ENCODE measurements at regions of chr7 and their contacts with region 1.

Region 1: GRCh38 chr7:47852330-47853245 is 95.7 kb downstream of the PKD1L1 start:
- DNase-seq: peak in 1 of 2 experiments; percentile 25
- H3K4me3 ChIP-seq: no peak overlapping the region
- H3K4me3 Mint-ChIP-seq: no peak overlapping the region
- H3K27ac Mint-ChIP-seq: no peak overlapping the region
- H3K4me1 ChIP-seq: no peaks in the 10 kb centered on the region
- H3K4me1 Mint-ChIP-seq: no peaks in the 10 kb centered on the region
- H3K27me3 ChIP-seq: no peaks in the 10 kb centered on the region
- H3K27me3 Mint-ChIP-seq: peaks cover 2% of the 10 kb centered on the region
- CTCF ChIP-seq: peak in 1 of 2 experiments; percentile 24

Region 2: GRCh38 chr7:47724335-47724982 is 128.1 kb before region 1 on chr7:
- CTCF ChIA-PET with region 1: no interaction called
- POLR2A ChIA-PET with region 1: no interaction called
- intact Hi-C with region 1: no loop called
- DNase-seq: peak; percentile 42 to 47
- H3K4me3 ChIP-seq: no peak overlapping the region
- H3K4me3 Mint-ChIP-seq: no peak overlapping the region
- H3K27ac Mint-ChIP-seq: peak overlapping the region; percentile 83
- H3K4me1 ChIP-seq: peaks cover 19% of the 10 kb centered on the region
- H3K4me1 Mint-ChIP-seq: peaks cover 47% of the 10 kb centered on the region
- H3K27me3 ChIP-seq: no peaks in the 10 kb centered on the region
- H3K27me3 Mint-ChIP-seq: no peaks in the 10 kb centered on the region
- CTCF ChIP-seq: no peak

Region 3: DNA sequence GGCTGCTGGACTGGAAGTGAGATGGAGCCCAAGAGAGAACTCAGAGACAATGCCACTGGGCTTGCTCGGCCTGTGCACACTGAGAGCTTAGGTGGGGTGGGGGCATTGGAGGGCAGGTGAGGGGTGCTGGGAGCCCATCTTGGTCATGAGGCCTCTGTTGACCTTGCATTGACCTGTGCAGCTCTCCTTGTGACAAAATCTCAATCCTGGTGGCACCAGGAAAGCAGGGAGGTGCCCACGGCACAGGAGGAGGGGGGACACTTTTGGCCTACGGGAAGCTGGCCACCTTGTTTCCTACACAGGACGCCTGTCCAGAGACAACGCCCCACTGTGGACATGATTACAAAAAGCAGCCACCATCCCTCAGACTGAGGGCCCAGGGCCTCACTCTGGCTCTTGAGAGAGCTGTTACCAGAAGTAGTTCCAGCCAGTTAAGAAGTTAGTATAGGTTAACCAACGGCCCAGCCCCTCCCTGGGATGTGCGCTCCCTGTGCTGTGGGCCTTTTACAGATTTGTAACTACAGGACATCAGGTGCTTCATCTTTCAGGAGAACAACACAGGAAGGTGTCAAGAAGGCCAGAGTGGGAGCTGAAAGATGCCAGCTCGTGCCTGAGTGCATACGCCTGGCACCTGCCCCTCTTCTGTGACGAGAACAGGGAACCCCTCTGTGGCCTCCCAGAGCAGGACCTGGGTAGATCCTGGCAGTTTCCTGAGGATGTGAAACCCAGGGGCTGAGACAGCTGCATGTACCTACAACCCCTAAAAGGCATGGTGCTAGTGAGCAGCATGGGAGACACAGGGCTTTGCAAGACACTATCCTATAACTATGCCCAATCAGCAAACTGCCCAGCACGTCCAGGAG is 85.4 kb after region 1 on chr7:
- CTCF ChIA-PET with region 1: interaction called, 3 read pairs
- POLR2A ChIA-PET with region 1: no interaction called
- intact Hi-C with region 1: loop called (anchors 2 kb)
- DNase-seq: no peak
- H3K4me3 ChIP-seq: no peak overlapping the region
- H3K4me3 Mint-ChIP-seq: no peak overlapping the region
- H3K27ac Mint-ChIP-seq: no peak overlapping the region
- H3K4me1 ChIP-seq: no peaks in the 10 kb centered on the region
- H3K4me1 Mint-ChIP-seq: peaks cover 7% of the 10 kb centered on the region
- H3K27me3 ChIP-seq: no peaks in the 10 kb centered on the region
- H3K27me3 Mint-ChIP-seq: no peaks in the 10 kb centered on the region
- CTCF ChIP-seq: no peak